Heart right ventricle (tissue), 16 donors: ENCODE measurements at regions of chr1 and their contacts with region 1.

Region 1: DNA sequence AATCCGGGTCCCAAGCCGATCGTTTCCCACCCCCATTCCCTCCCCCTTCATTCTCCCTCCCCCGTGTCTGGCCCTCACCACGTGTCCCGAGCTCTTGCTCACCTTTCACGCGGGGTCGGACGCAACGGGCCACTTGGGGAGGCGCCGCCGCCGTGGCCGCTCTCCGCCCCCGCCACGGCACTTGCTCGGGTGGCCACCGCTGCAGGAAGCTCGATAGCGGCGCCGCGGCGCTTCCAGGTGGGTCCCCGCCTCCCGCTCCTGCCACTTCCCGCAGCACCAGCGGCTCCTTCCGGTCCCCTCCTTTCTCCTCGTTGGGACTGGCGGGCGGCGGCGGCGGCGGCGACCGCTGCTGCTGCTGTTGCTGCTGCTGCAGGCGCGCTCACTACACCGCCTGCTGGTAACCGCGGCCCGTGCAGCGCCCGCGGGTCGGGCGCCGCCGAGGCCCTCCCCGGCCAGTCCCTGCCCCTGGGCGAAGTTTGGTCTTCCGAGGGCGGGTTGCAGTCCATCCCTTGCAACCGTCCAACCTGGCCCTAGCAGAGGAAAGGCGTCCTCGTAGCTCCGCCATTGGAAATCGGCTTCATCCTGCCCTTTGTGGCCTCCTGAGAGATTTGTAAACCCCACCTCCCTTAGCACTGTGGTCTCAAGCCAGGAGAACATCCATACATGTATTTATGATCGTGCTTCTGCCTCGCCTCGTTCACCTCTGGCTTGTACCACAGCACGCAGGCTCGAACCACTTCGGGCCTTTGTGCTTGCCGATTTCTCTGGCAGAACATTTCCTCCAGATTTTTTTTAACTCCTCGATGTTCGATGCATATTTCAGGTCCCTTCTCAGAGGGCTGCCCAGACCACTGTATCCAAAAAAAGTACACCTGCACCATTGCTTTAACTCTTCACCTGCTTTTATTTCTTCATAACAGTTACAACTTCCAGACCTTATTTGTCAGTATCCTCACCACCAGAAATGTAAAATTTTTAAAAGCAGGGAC is 996 bp upstream of the ZZZ3 start:
- DNase-seq: peak; percentile 92 to 94
- ATAC-seq: peak; percentile 86 to 93 (median 90)
- H3K4me3 ChIP-seq: peak overlapping the region; percentile 56 to 85 (median 76)
- H3K27ac ChIP-seq: peak overlapping the region; percentile 71 to 97 (median 93)
- H3K4me1 ChIP-seq: peaks cover 0 to 54% (median 44%) of the 10 kb centered on the region in 9 donors
- H3K27me3 ChIP-seq: no peaks in the 10 kb centered on the region
- CTCF ChIP-seq: peak; percentile 85 to 98 (median 95)

Region 2: DNA sequence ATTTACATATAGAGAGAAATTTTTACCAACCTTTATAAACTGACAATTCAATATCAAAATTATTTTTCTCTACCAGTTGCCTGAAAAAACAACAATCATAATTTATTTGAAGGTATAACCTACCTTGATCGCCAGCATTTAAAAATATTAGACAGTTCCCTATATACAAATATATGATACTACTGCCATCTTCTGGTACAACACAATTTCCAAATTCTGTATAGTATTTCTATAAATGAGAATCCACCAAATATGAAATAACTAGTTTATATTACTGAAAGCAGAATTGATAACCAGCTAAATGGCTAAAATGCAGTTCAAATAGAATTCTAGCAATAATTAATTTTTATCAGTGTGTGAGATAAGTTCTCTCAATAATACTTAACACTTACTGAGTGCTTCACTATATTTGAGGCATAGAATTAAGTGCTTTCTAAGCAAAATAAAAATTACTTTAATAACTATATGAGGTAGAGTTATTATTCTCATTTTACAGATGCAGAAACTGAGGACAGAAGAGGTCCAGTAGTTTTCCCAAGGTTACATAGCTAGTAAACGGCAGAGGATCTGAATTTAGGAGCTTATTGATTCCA is 539.8 kb before region 1 on chr1:
- intact Hi-C with region 1: loop called in 3 of 10 experiments (anchors 5 to 10 kb)
- DNase-seq: no peak
- ATAC-seq: no peak
- H3K4me3 ChIP-seq: no peak overlapping the region
- H3K27ac ChIP-seq: no peak overlapping the region
- H3K4me1 ChIP-seq: no peaks in the 10 kb centered on the region
- H3K27me3 ChIP-seq: no peaks in the 10 kb centered on the region
- CTCF ChIP-seq: peak in 7 of 9 donors; percentile 15 to 51 (median 40)

Region 3: GRCh38 chr1:77219166-77219887 is 464.1 kb before region 1 on chr1 and contains the start of gene PIGK:
- intact Hi-C with region 1: loop called in 2 of 10 experiments (anchors 2 to 5 kb)
- DNase-seq: peak; percentile 86 to 88
- ATAC-seq: peak; percentile 95 to 99 (median 99)
- H3K4me3 ChIP-seq: peak within 1 kb of the TSS; percentile 50 to 83 (median 74)
- H3K27ac ChIP-seq: peak within 1 kb of the TSS in 9 of 10 donors; percentile 74 to 92 (median 85)
- H3K4me1 ChIP-seq: peaks cover 0 to 23% (median 15%) of the 10 kb centered on the region in 9 donors
- H3K27me3 ChIP-seq: no peaks in the 10 kb centered on the region
- CTCF ChIP-seq: peak in 1 of 9 donors; percentile 14
- total RNA-seq, gene PIGK: 24.4 to 40.7 (median 30.8) TPM

Region 4: DNA sequence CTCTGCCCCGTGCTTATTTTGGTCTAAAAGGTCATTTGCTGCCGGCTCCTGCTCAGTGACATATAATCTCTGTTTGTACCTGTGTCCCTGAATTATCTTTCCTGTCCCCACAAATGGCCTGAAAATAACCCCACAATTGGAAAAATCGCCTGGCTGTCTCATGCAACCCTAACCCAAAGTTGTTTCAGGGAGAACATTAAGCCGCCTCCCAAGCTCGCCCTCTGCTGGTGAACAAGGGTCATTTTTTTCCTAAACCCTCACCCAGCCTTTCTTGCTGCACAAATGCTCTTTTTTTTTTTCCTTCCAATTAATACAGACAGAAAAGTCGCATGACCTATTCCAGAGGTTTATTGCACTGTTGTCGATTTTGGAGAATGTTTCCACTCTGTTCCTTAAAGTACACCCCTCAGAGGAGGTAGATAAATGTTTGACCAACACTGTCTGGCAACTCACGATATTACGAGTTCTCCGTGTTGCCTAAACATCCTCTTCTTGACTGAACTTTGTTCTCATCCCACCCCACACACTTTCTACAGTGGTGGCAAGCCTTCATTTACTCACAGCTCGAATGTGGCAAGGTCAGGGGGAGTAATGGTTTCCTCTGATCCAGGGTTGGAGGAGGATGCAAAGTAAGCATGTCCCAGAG is 149.7 kb before region 1 on chr1:
- intact Hi-C with region 1: loop called in 2 of 10 experiments (anchors 10 kb)
- DNase-seq: peak; percentile 34 to 62
- ATAC-seq: peak in 7 of 8 donors; percentile 38 to 74 (median 57)
- H3K4me3 ChIP-seq: no peak overlapping the region
- H3K27ac ChIP-seq: no peak overlapping the region
- H3K4me1 ChIP-seq: peaks cover 0 to 16% (median 0%) of the 10 kb centered on the region in 9 donors
- H3K27me3 ChIP-seq: no peaks in the 10 kb centered on the region
- CTCF ChIP-seq: peak; percentile 68 to 87 (median 84)

Region 5: GRCh38 chr1:77582905-77583304 is 100.5 kb before region 1 on chr1:
- intact Hi-C with region 1: loop called in 1 of 10 experiments (anchors 10 kb)
- DNase-seq: no peak
- ATAC-seq: no peak
- H3K4me3 ChIP-seq: no peak overlapping the region
- H3K27ac ChIP-seq: no peak overlapping the region
- H3K4me1 ChIP-seq: no peaks in the 10 kb centered on the region
- H3K27me3 ChIP-seq: no peaks in the 10 kb centered on the region
- CTCF ChIP-seq: no peak

Region 6: DNA sequence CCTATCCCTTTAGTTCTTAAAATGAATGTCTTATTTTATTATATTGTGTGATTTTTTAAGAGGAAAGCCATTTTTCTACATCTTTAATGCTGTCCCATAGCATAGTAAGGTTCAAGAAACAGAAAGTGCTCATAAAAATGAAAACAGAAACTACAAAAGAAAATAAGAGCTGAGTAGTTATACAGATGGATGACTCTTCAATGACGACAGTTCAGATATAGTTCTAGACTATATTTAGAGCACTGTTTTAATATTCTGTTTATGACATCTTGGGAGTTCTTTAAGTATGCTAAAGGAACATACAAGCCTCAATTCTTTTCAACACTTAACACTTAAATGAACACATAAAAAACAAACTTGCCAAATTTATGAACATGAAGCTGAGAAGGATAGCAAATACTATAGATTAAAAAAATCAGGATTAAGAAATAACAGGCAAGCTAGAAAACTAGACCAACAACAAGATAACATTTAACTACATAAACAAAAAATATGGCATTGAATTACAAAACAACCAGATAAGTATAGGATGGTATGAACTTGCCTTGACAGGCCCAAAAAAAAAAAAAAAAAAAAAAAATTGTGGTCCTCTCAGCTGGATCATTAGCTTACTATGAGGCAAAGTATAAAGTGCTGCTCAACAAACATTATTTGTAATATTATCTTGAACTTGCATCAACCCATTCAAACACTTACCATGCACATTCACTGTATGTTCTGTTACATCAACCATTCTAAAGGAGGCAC is 88.9 kb before region 1 on chr1:
- intact Hi-C with region 1: loop called in 2 of 10 experiments (anchors 10 kb)
- DNase-seq: no peak
- ATAC-seq: no peak
- H3K4me3 ChIP-seq: no peak overlapping the region
- H3K27ac ChIP-seq: no peak overlapping the region
- H3K4me1 ChIP-seq: peaks cover 0 to 24% (median 0%) of the 10 kb centered on the region in 9 donors
- H3K27me3 ChIP-seq: no peaks in the 10 kb centered on the region
- CTCF ChIP-seq: no peak